Left cardiac atrium (tissue), 4 donors: ENCODE measurements at regions of chr10 and their contacts with region 1.

Region 1: GRCh38 chr10:97463363-97464132 is 17.6 kb downstream of the ZDHHC16 start:
- DNase-seq: no peak
- ATAC-seq: peak; percentile 39 to 60

Region 2: GRCh38 chr10:97349752-97350513 is 113.6 kb before region 1 on chr10:
- intact Hi-C with region 1: no loop called
- DNase-seq: no peak
- ATAC-seq: no peak

Region 3: GRCh38 chr10:97543025-97543575 is 79.6 kb after region 1 on chr10:
- intact Hi-C with region 1: loop called in 1 of 2 experiments (anchors 5 kb)
- DNase-seq: peak; percentile 90
- ATAC-seq: peak; percentile 75 to 92

Region 4: DNA sequence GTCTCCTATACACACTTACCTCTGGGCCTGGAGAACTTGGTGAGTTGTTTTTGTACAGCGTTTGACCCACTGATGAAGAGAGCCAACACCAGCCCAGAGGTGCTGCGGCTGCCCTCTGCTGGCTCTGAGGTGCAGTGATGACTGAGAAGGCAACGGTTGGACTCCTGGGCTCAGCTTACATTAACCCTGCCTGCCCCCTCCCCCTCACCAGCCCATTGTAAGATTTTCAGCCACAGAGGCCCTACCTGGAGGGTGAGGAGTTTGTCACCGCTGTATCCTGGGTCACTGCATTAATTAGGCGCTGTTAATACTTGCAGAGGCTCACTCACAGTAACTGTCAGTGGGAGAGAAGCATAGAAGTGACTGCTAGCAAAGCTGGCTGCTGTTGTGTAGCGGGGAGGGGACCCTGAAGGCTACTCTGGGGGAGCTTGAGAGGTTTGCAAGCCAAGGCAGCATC is 90.1 kb after region 1 on chr10:
- intact Hi-C with region 1: loop called (anchors 5 kb)
- DNase-seq: peak; percentile 72
- ATAC-seq: peak; percentile 89 to 91

Region 5: GRCh38 chr10:97708976-97709946 is 245.7 kb after region 1 on chr10:
- intact Hi-C with region 1: no loop called
- DNase-seq: peak; percentile 76
- ATAC-seq: peak; percentile 21 to 49